Endothelial cell of umbilical vein (primary cell): ENCODE measurements at regions of chr15 and their contacts with region 1.

Region 1: GRCh38 chr15:98896802-98897732 is 110.5 kb downstream of the PGPEP1L start:
- DNase-seq: peak; percentile 95
- H3K4me3 ChIP-seq: peak overlapping the region in 1 of 3 experiments; percentile 1
- H3K27ac ChIP-seq: peak overlapping the region; percentile 99
- H3K4me1 ChIP-seq: peaks cover 32% of the 10 kb centered on the region
- H3K27me3 ChIP-seq: no peaks in the 10 kb centered on the region
- CTCF ChIP-seq: no peak
- POLR2A ChIP-seq: no peak

Region 2: GRCh38 chr15:98865397-98866339 is 31.4 kb before region 1 on chr15:
- CTCF ChIA-PET with region 1: interaction called, 3 read pairs
- POLR2A ChIA-PET with region 1: no interaction called
- dilution Hi-C with region 1: no loop called
- intact Hi-C with region 1: loop called (anchors 1 kb)
- DNase-seq: peak; percentile 68
- H3K4me3 ChIP-seq: peak overlapping the region; percentile 25 to 78 (median 44)
- H3K27ac ChIP-seq: peak overlapping the region; percentile 78
- H3K4me1 ChIP-seq: peaks cover 4% of the 10 kb centered on the region
- H3K27me3 ChIP-seq: no peaks in the 10 kb centered on the region
- CTCF ChIP-seq: no peak
- POLR2A ChIP-seq: peak; percentile 23

Region 3: GRCh38 chr15:99016680-99017321 is 119.7 kb after region 1 on chr15:
- CTCF ChIA-PET with region 1: no interaction called
- POLR2A ChIA-PET with region 1: no interaction called
- dilution Hi-C with region 1: no loop called
- intact Hi-C with region 1: no loop called
- DNase-seq: no peak
- H3K4me3 ChIP-seq: no peak overlapping the region
- H3K27ac ChIP-seq: no peak overlapping the region
- H3K4me1 ChIP-seq: no peaks in the 10 kb centered on the region
- H3K27me3 ChIP-seq: peaks cover 7 to 9% of the 10 kb centered on the region in 2 experiments
- CTCF ChIP-seq: no peak
- POLR2A ChIP-seq: no peak